Activated CD4-positive, alpha-beta memory T cell treated with anti-CD3 and anti-CD28 coated beads for 36 hours (primary cell): ENCODE measurements at regions of chr1 and their contacts with region 1.

Region 1: DNA sequence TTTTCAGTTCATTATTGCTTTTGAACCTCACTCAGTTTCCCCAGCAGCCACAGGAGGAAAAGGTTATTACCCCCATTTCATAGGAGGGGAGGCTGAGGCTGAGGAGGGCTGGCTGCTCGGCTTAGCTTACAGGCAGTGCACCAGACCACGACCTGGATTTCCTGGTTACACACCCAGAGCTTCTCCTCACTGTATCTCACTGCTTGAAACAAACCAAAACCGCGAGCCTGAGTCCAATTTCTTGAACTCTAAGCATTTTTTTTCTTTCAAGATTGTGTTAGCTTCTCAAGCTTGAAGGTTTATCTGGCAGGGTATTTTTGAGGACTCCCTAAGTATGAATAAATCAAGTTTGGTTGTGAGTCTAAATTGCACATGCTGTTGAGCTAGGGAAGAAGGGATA is 188.9 kb upstream of the EDN2 start:
- DNase-seq: peak; percentile 72
- H3K4me3 Mint-ChIP-seq: peak overlapping the region; percentile 53
- H3K27ac Mint-ChIP-seq: peak overlapping the region; percentile 76
- H3K4me1 Mint-ChIP-seq: peaks cover 94% of the 10 kb centered on the region
- H3K27me3 Mint-ChIP-seq: no peaks in the 10 kb centered on the region

Region 2: GRCh38 chr1:41683681-41684500 is 10.5 kb after region 1 on chr1:
- CTCF ChIA-PET with region 1: interaction called, 4 read pairs
- POLR2A ChIA-PET with region 1: interaction called, 12 read pairs
- intact Hi-C with region 1: no loop called
- DNase-seq: peak; percentile 60
- H3K4me3 Mint-ChIP-seq: no peak overlapping the region
- H3K27ac Mint-ChIP-seq: peak overlapping the region; percentile 36
- H3K4me1 Mint-ChIP-seq: peaks cover 47% of the 10 kb centered on the region
- H3K27me3 Mint-ChIP-seq: no peaks in the 10 kb centered on the region